ENCODE measurements at regions of chr6 and their contacts with region 1.

Region 1: DNA sequence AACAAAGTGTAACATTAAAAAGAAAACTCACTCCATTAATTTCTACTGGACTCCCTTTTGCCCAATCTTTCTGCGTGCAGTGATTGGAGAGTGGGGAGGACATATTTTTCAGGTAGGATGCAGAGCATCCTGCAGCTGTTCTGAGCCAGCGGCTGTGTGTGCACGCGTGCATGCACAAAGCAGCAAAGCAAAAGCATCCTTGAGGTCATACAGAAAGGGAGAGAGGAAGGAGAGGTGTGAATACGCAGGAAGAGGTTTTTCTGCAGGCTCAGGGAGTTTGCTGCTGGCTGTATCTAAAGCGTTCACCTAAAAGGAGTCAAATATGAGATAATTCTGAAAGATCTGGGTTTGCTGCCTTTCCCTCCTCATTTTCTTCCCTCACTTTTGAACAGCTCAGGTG is 108.4 kb downstream of the HUS1B start:
- DNase-seq: no peak
- H3K4me3 Mint-ChIP-seq: peak overlapping the region; percentile 75
- H3K27ac Mint-ChIP-seq: peak overlapping the region; percentile 99
- H3K4me1 Mint-ChIP-seq: peaks cover 75% of the 10 kb centered on the region
- H3K27me3 Mint-ChIP-seq: no peaks in the 10 kb centered on the region

Region 2: DNA sequence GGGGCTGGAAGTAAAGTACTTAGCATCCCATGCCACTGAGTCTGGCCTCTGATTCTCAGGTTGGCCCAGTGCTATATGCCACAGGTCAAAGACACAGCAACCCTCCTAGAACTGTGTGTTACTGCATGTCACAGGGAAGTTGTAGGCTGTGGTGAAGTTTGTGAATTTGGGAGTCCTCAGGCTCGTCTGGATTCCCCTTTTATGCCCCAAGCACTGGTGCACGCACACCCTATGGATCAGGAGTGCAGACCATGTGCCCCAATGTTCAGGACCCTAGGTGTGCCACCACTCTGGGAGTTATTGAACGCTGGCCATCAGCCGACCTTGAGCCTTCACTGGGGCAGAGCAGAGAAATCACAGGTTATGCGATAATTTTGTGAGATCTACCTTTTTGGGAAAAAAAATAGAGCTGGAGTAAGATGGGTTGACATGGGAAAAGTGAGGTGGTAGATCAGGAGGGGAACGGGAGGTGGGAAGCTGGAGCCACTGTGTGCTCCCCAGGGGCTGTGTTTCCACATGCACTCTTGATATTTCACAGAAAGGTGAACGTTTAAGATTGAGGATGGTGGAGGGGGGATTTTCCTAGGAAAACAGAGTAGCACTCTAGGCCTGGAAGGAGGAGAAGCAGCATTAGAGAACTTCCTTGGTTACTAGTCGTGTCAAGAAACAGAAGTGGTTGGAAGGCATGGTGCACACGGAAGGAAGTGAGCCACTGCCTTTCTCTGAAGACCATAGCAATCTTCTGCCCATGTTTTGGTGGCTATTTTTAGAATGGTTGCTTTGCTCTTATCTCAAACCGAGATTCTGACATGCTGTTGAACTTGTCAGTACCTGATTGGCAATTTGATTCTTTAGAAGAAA is 212.1 kb before region 1 on chr6:
- intact Hi-C with region 1: loop called (anchors 5 kb)
- DNase-seq: peak; percentile 23
- H3K4me3 Mint-ChIP-seq: peak overlapping the region; percentile 35
- H3K27ac Mint-ChIP-seq: peak overlapping the region; percentile 74
- H3K4me1 Mint-ChIP-seq: peaks cover 55% of the 10 kb centered on the region
- H3K27me3 Mint-ChIP-seq: no peaks in the 10 kb centered on the region

Region 3: DNA sequence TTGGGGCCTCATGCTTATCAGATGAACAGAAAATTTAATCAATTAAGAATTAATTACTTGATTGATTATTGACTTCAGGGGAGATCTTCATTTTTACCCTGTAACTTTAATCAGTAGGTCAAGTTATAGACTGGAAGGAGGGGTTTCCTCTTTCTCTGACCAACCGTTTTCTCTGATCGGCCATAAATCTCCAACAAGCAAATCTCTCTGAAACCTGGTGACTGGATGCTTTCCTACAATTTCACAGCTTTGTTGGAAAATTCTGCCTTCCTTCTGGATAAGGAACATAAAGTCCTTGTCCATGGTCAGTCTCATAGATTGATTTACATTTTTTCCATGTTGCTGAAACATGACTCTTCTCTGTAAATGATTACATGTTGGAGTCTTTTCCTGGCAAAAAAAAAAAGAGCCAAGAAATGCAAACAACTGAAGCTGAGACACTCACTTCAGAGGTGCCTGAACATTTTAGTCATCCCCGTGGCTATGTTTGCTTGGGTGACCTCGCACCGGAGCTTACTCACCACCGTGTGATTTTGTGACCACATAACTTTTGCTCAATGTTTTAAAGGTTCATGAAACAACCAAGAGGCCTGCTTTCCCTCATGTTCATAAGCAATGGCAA is 126.0 kb before region 1 on chr6:
- intact Hi-C with region 1: loop called (anchors 2 kb)
- DNase-seq: peak; percentile 52
- H3K4me3 Mint-ChIP-seq: no peak overlapping the region
- H3K27ac Mint-ChIP-seq: peak overlapping the region; percentile 91
- H3K4me1 Mint-ChIP-seq: peaks cover 30% of the 10 kb centered on the region
- H3K27me3 Mint-ChIP-seq: no peaks in the 10 kb centered on the region

Region 4: DNA sequence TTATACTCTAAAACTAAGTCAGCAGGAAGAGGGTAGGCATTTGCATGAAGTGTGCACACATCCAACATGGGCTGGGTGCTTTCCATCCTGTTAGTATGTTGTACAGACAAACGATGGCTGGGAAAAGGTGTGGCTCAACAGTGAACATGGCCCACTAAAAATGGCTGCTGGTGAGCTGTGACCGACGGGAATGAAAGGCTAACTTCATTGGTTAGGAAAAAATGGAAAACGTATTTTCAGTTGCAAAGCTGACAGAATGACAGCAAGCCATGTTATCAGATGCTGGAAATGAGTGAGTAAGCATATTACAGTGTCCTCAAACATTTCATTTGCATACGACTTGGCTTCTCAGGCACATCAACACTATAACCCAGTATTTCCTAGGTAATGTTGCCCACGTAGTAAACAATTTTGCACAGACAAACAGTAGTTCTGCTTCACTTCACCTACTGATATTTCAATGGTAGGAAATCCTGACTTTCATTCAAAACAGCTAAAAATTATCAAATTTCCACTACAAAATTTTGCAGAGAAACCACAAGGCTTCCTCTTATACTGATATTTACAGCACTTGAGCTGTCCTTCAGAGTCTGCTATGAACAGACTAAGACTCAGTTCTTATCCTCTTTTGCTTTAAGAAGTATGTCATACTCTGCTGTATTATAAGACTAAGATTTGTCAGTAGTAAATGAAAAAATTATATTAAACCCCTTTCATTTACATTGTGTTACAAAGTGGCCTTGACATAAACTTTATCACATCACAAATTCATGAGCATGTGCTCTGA is 58.1 kb before region 1 on chr6:
- intact Hi-C with region 1: loop called (anchors 1 kb)
- DNase-seq: no peak
- H3K4me3 Mint-ChIP-seq: peak overlapping the region; percentile 46
- H3K27ac Mint-ChIP-seq: peak overlapping the region; percentile 99
- H3K4me1 Mint-ChIP-seq: peaks cover 84% of the 10 kb centered on the region
- H3K27me3 Mint-ChIP-seq: no peaks in the 10 kb centered on the region

Region 5: DNA sequence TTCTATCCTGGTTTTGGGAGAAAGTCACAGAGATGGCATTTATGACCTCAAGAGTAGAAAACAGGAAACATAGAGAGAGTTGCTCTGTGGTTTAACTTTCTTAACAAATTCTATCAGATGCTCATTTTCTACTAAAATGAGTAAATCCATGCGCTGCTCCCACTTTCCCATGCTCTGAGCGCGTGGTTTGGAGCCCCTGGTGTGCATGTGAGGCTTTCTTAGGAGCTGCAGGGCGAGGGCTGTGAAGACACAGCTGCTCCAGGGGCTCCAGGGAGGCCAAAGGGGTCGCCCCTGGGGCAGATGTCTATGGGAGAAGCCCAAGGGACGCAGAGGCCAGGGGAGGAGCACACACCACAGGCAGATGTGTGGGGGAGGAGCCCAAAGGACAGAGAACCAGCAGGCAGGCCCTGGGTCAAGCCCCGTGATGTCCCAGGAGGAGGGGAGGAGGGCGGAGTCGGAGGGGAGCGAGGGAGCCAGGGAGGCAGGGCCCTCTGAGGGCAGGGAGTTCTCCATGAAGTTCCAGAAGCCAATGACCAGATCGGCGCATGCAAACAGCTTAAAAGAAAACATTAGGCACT is 34.0 kb before region 1 on chr6:
- intact Hi-C with region 1: loop called (anchors 1 kb)
- DNase-seq: no peak
- H3K4me3 Mint-ChIP-seq: peak overlapping the region; percentile 22
- H3K27ac Mint-ChIP-seq: peak overlapping the region; percentile 96
- H3K4me1 Mint-ChIP-seq: peaks cover 62% of the 10 kb centered on the region
- H3K27me3 Mint-ChIP-seq: no peaks in the 10 kb centered on the region

Measured in activated T-helper 2 cell treated with anti-CD3 and anti-CD28 coated beads, Interferon-gamma antibody, Interleukin-2, Interleukin-4, amounts not matched to agents 10 μg/mL and 5 μg/mL and 100 μg/mL, durations not matched to agents 14 hours and 24 hours and 36 hours (primary cell).